ENCODE measurements at regions of chr1 and their contacts with region 1.

Region 1: GRCh38 chr1:201216395-201217085 is 25.9 kb downstream of the IGFN1 start:
- DNase-seq: peak in 1 of 9 experiments; percentile 34
- ATAC-seq: no peak
- H3K4me3 ChIP-seq: no peak overlapping the region
- H3K4me3 Mint-ChIP-seq: no peak overlapping the region
- H3K27ac ChIP-seq: no peak overlapping the region
- H3K27ac Mint-ChIP-seq: no peak overlapping the region
- H3K4me1 ChIP-seq: no peaks in the 10 kb centered on the region
- H3K4me1 Mint-ChIP-seq: no peaks in the 10 kb centered on the region
- H3K27me3 ChIP-seq: no peaks in the 10 kb centered on the region
- H3K27me3 Mint-ChIP-seq: peaks cover 10% of the 10 kb centered on the region
- CTCF ChIP-seq: no peak

Region 2: DNA sequence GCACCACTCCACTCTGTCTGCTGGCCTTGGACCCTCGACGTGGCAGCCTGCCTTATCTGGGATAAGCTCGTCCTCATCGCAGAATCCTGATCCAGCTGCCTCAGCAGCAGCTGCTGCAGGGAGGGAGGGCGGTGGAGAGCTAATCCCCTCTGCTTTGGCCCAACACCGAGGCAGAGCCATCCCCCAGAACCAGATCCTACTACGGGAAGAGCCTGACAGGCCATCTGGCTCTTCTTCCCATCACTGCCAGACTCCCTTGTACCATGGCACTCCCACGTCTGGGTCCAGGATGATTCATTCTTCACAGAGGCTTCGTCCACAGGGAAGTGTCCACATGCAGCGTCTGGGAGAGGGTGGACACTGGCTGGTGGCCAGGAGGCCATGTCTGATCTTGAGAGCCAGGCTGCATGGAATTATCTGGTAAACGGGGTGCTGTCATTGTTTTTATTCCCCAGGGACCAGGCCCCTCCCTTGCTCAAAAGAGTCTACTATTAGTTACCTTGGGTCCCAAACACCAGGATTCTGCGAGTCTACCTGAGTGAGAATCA is 52.1 kb after region 1 on chr1:
- CTCF ChIA-PET with region 1: no interaction called
- POLR2A ChIA-PET with region 1: no interaction called
- intact Hi-C with region 1: loop called in 1 of 2 experiments (anchors 5 kb)
- DNase-seq: no peak
- ATAC-seq: no peak
- H3K4me3 ChIP-seq: no peak overlapping the region
- H3K4me3 Mint-ChIP-seq: no peak overlapping the region
- H3K27ac ChIP-seq: no peak overlapping the region
- H3K27ac Mint-ChIP-seq: no peak overlapping the region
- H3K4me1 ChIP-seq: no peaks in the 10 kb centered on the region
- H3K4me1 Mint-ChIP-seq: no peaks in the 10 kb centered on the region
- H3K27me3 ChIP-seq: no peaks in the 10 kb centered on the region
- H3K27me3 Mint-ChIP-seq: peaks cover 25% of the 10 kb centered on the region
- CTCF ChIP-seq: no peak

Region 3: DNA sequence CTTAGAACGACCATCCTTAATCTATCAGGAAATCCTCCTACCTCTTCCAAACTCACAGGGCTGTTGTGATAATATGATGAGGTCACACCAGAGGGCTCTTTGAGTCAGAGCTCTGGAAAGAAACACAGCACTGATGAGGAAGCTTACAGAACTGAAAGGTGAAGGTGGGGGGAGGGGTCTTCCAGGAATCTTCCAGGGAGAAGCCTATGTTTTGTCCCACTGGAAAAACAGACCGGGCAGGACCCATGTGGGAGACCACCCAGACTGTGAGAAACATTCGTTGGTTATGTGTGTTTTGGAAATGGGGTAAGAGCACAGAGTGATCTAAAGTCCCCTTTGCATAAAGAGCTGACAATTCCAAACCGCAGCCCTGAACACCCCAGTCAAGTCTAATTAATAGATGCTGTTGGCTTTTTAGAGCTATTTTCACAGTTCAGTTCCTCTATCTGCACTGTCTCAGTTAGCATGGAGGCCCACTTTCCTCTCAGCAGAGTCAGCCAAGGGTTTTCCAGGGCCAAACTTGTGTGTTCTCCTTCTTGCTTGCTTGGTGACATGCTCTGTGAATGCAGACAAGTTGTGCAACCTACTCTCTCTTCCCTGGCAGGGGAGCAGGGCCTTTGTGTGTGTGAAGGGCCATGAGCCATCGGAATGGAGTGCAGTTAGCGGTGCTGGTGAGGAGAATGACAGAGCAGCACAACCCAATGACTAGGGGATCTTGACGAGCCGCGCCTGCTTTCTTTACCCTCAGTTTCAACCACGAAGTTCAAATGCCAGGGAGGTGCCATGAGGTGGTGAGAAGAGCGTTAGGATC is 240.2 kb after region 1 on chr1:
- CTCF ChIA-PET with region 1: no interaction called
- POLR2A ChIA-PET with region 1: no interaction called
- intact Hi-C with region 1: no loop called
- DNase-seq: no peak
- ATAC-seq: no peak
- H3K4me3 ChIP-seq: no peak overlapping the region
- H3K4me3 Mint-ChIP-seq: no peak overlapping the region
- H3K27ac ChIP-seq: no peak overlapping the region
- H3K27ac Mint-ChIP-seq: no peak overlapping the region
- H3K4me1 ChIP-seq: no peaks in the 10 kb centered on the region
- H3K4me1 Mint-ChIP-seq: no peaks in the 10 kb centered on the region
- H3K27me3 ChIP-seq: no peaks in the 10 kb centered on the region
- H3K27me3 Mint-ChIP-seq: peaks cover 3% of the 10 kb centered on the region
- CTCF ChIP-seq: no peak

Measured in CD8-positive, alpha-beta T cell (primary cell).